PC-9 (cell line): ENCODE measurements at regions of chr12 and their contacts with region 1.

Region 1: DNA sequence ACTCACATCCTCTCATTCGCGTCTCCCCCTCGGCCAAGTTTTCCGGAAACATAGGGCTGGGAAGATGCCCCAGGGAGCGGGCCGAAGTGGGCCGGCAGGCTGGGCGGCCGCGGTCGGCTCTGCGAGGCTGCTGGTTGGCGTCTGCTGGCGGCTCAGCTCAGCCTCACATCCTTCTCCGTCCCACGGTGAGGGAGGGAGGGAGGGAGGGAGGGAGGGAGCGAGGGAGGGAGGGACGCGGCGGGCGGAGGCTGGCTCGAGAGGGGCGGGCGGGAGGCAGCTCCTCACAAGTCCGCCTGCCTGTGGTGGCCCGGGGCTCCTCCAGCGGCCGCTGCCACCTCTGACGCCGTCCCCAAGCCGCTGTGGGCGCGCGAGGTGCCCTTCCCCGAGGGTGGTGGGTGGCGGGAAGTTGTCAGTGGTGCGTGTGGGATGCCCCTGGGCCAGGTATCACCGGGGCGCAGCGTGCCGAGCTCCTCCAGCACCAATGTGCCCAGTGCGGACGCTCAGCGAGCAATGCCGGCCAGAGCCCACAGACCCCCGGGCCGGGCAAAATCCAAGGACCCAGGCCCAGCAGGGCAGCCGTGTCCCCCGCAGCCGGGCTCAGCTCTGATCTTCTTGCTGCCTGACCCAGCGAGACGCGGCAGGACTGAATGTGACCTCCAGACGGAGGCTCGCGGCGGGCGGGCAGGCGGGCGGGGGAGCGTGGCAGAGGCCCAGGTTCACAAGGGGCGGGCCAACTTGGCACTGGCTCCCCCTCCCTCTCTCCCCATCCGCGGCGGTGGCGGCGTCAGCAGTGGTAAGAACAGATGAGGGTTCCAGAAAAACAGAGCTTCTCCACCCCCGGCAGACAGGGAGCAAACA is 94.0 kb downstream of the RFLNA start:
- DNase-seq: peak; percentile 67 to 88
- H3K4me3 ChIP-seq: peak overlapping the region; percentile 98
- H3K27ac ChIP-seq: peak overlapping the region; percentile 96
- H3K4me1 ChIP-seq: peaks cover 67% of the 10 kb centered on the region
- H3K27me3 ChIP-seq: no peaks in the 10 kb centered on the region
- CTCF ChIP-seq: no peak; the same call in 1 of the 2 replicates

Region 2: DNA sequence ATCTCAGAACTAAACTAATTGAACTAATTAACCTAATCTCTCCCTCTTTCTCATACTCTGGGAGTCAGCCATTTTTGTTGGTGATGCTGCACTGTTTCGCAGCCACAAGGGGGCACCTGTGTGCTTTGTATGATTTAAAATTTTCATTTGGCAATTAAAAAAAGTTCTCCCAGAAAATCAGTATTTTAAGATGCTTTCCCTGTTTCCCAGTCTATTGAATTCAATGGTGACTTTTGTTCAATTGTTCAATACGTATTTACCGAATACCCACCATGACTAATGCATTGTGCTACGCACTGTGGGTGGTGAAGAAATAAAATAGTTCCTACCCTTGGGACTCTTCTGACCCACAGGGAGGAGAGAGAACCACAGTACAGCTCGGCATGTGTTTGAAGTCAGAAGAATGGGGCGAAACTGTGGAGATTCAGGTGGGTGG is 352.2 kb before region 1 on chr12:
- CTCF ChIA-PET with region 1: no interaction called
- POLR2A ChIA-PET with region 1: no interaction called
- intact Hi-C with region 1: loop called (anchors 2 kb)
- DNase-seq: peak in 1 of 2 experiments; percentile 37
- H3K4me3 ChIP-seq: no peak overlapping the region
- H3K27ac ChIP-seq: no peak overlapping the region
- H3K4me1 ChIP-seq: no peaks in the 10 kb centered on the region
- H3K27me3 ChIP-seq: no peaks in the 10 kb centered on the region
- CTCF ChIP-seq: peak; percentile 91

Region 3: DNA sequence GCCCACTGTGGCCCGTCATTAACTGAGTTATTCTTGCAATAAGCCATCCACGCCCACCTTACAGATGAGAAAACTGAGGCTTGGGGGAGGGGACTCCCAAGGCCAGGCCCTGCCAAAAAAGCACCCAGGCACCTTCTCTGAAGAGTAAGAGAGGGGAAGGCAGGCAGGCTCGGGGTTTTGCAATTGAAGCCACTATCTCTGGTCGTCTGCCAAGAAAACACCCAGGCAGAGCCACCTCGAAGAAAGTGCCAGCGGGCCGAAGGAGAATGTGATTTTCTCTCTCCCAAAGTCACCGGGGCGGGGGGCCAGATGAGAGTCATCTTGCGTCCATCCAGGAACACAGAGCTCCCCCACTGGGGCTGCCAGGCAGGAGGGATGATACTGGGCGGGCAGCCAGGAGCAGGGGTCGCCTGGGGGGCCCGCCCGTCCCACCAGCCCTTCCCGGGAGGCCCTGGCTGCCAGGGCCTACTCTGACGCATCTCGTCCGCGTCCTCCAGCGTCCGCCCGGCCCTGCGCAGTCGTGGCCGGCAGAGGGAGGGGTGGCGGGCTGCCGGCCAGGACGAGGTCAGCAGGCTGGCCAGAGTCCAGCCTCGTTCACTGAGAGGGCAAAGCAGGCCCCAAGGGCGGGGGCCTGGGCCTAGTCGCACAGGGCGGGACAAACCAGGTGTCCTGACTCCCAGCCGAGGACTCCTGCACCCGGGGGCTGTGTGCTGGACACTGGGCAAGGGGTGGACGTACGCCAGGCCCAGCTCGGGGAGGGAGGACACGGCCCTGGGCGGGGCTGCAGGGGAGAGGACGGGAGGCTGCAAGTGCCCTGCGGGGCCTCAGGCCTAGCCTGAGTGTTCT is 19.6 kb before region 1 on chr12:
- CTCF ChIA-PET with region 1: no interaction called
- POLR2A ChIA-PET with region 1: interaction called, 17 read pairs
- intact Hi-C with region 1: loop called (anchors 1 kb)
- DNase-seq: peak; percentile 92 to 100
- H3K4me3 ChIP-seq: peak overlapping the region; percentile 35; the same call in 1 of the 2 replicates
- H3K27ac ChIP-seq: peak overlapping the region; percentile 69
- H3K4me1 ChIP-seq: peaks cover 48% of the 10 kb centered on the region
- H3K27me3 ChIP-seq: no peaks in the 10 kb centered on the region
- CTCF ChIP-seq: 0 out of 2 replicates have a peak, but pooled peaks have one; percentile 32

Region 4: GRCh38 chr12:124441443-124442194 is 52.7 kb after region 1 on chr12:
- CTCF ChIA-PET with region 1: no interaction called
- POLR2A ChIA-PET with region 1: no interaction called
- intact Hi-C with region 1: loop called (anchors 2 kb)
- DNase-seq: peak; percentile 82 to 89
- H3K4me3 ChIP-seq: peak overlapping the region; percentile 52
- H3K27ac ChIP-seq: peak overlapping the region; percentile 97
- H3K4me1 ChIP-seq: peaks cover 33% of the 10 kb centered on the region
- H3K27me3 ChIP-seq: no peaks in the 10 kb centered on the region
- CTCF ChIP-seq: no peak

Region 5: GRCh38 chr12:124512667-124513296 is 123.9 kb after region 1 on chr12:
- CTCF ChIA-PET with region 1: interaction called, 4 read pairs
- POLR2A ChIA-PET with region 1: no interaction called
- intact Hi-C with region 1: loop called (anchors 2 kb)
- DNase-seq: peak; percentile 89 to 92
- H3K4me3 ChIP-seq: peak overlapping the region; percentile 39; the same call in 1 of the 2 replicates
- H3K27ac ChIP-seq: peak overlapping the region; percentile 77
- H3K4me1 ChIP-seq: peaks cover 79% of the 10 kb centered on the region
- H3K27me3 ChIP-seq: no peaks in the 10 kb centered on the region
- CTCF ChIP-seq: no peak

Region 6: DNA sequence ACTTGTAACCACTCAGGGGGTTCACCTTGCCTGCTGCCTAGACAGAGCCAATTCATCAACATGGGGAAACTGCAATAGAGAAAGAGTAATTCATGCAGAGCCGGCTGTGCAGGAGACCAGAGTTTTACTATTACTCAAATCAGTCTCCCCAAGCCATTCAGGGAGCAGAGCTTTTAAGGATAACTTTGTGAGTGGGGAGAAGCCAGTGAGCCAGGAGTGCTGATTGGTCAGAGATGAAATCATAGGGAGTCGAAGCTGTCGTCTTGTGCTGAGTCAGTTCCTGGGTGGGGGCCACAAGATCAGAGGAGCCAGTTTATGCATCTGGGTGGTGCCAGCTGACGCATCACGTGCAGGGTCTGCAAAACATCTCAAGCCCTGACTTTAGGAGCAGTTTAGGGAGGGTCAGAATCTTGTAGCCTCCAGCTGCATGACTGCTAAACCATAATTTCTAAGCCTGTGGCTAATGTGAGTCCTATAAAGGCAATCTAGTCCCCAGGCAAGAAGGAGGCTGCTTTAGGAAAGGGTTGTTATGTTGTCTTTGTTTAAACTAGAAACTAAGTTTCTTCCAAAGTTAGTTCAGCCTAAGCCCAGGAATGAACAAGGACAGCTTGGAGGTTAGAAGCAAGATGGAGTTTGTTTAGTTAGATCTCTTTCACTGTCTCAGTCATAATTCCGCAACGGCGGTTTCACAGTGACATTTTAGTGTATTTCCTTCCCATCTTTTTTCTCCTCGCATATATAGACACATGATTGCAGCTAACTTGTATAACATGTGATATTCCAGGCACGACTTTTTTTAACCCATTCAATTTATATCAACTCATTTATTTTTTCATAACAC is 247.4 kb after region 1 on chr12:
- CTCF ChIA-PET with region 1: no interaction called
- POLR2A ChIA-PET with region 1: interaction called, 37 read pairs
- intact Hi-C with region 1: no loop called
- DNase-seq: peak in 1 of 2 experiments; percentile 59
- H3K4me3 ChIP-seq: no peak overlapping the region
- H3K27ac ChIP-seq: peak overlapping the region; percentile 96
- H3K4me1 ChIP-seq: peaks cover 93% of the 10 kb centered on the region
- H3K27me3 ChIP-seq: no peaks in the 10 kb centered on the region
- CTCF ChIP-seq: no peak

Region 7: GRCh38 chr12:124917135-124917840 is 528.4 kb after region 1 on chr12:
- CTCF ChIA-PET with region 1: no interaction called
- POLR2A ChIA-PET with region 1: interaction called, 26 read pairs
- intact Hi-C with region 1: loop called (anchors 5 kb)
- DNase-seq: peak; percentile 95 to 99
- H3K4me3 ChIP-seq: peak overlapping the region; percentile 100
- H3K27ac ChIP-seq: peak overlapping the region; percentile 100
- H3K4me1 ChIP-seq: peaks cover 54% of the 10 kb centered on the region
- H3K27me3 ChIP-seq: no peaks in the 10 kb centered on the region
- CTCF ChIP-seq: 0 out of 2 replicates have a peak, but pooled peaks have one; percentile 5

Region 8: DNA sequence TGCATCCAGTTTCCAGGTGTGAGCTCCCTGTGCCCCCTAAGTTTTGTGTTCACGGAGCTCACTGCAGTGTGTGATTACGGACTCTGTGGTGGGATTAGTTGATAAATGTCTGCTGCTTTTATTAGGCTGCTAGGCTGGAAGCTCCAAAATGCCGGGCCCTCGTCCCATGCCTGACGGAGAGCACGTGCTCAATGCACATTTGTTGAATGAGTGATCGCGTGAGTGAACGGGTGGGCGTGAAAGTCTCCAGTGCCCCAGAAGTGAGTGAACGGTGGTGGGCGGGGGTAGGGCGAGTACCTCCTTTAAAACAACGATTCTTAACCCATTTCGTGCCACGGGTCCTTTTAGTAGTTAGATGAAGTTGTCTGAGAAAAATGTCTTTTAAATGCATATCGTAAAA is 851.8 kb after region 1 on chr12:
- CTCF ChIA-PET with region 1: no interaction called
- POLR2A ChIA-PET with region 1: no interaction called
- intact Hi-C with region 1: no loop called
- DNase-seq: no peak
- H3K4me3 ChIP-seq: no peak overlapping the region
- H3K27ac ChIP-seq: no peak overlapping the region
- H3K4me1 ChIP-seq: no peaks in the 10 kb centered on the region
- H3K27me3 ChIP-seq: peaks cover 89% of the 10 kb centered on the region
- CTCF ChIP-seq: no peak